CD8-positive, alpha-beta memory T cell (primary cell): ENCODE measurements at regions of chr5 and their contacts with region 1.

Region 1: DNA sequence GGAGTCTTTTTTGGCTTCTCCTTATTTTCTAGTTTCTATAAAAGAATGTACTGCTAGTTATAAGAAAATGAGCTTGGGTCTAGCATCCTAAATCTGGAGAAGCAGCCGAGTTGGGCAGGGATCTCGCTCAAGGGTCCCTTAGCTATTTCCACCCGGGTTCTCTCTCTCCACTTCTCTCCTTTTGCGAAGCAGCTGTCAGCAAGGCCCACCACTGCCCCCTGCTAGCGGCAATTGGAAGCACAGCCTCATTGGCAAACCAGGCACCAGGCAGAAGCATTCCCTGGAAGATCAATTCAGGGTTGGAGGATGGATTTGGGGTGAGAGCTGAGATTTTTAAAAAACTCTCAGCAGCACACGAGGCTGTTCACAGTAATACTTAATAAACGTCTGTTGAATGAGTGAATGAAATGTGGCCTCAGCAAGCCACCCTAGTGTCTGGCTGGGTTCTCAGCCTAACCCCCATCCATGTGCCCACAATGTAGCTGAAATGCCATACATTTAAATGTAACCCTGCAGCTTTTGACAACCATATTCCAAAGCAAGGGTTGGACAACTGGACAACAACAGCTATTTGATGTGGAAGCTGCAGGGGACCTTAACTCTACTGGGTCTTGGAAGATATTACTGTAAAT is 34.6 kb upstream of the TNIP1 start:
- DNase-seq: peak; percentile 57 to 79 (median 65)
- H3K4me3 ChIP-seq: no peak overlapping the region
- H3K4me3 Mint-ChIP-seq: no peak overlapping the region
- H3K27ac ChIP-seq: no peak overlapping the region
- H3K27ac Mint-ChIP-seq: peak overlapping the region in 7 of 8 donors; percentile 21 to 57 (median 42)
- H3K4me1 ChIP-seq: peaks cover 4% of the 10 kb centered on the region
- H3K4me1 Mint-ChIP-seq: peaks cover 0 to 32% (median 6%) of the 10 kb centered on the region in 3 donors
- H3K27me3 ChIP-seq: no peaks in the 10 kb centered on the region
- H3K27me3 Mint-ChIP-seq: no peaks in the 10 kb centered on the region

Region 2: DNA sequence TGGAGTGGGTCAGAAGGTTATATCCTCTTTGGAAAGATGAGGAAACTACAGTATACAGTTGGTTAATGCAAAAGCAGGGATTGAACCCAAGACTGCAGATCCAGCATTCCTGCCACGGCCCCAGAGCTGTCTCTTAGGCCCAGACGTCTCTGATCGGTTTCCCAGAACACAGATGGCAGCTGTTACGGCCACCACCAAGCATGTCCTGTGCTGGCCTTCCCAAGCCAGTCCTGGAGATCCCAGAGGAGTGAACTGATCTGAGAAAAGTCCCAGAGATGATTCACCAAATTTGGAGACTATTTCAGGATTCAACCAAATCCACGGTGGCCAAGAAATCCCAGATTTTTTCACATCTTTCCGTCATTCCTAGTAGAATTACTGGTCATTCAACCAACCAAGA is 54.6 kb before region 1 on chr5:
- CTCF ChIA-PET with region 1: interaction called, 267 read pairs
- POLR2A ChIA-PET with region 1: no interaction called
- DNase-seq: no peak
- H3K4me3 ChIP-seq: no peak overlapping the region
- H3K4me3 Mint-ChIP-seq: no peak overlapping the region
- H3K27ac ChIP-seq: no peak overlapping the region
- H3K27ac Mint-ChIP-seq: peak overlapping the region in 7 of 8 donors; percentile 35 to 94 (median 50)
- H3K4me1 ChIP-seq: peaks cover 8% of the 10 kb centered on the region
- H3K4me1 Mint-ChIP-seq: peaks cover 18 to 57% (median 18%) of the 10 kb centered on the region in 3 donors
- H3K27me3 ChIP-seq: no peaks in the 10 kb centered on the region
- H3K27me3 Mint-ChIP-seq: no peaks in the 10 kb centered on the region

Region 3: GRCh38 chr5:151086905-151087360 is 28.5 kb before region 1 on chr5:
- CTCF ChIA-PET with region 1: interaction called, 40 read pairs
- POLR2A ChIA-PET with region 1: no interaction called
- DNase-seq: peak in 4 of 5 donors; percentile 57 to 78 (median 66)
- H3K4me3 ChIP-seq: peak overlapping the region; percentile 23
- H3K4me3 Mint-ChIP-seq: peak overlapping the region; percentile 49 to 87 (median 62)
- H3K27ac ChIP-seq: peak overlapping the region; percentile 41
- H3K27ac Mint-ChIP-seq: peak overlapping the region; percentile 59 to 96 (median 82)
- H3K4me1 ChIP-seq: peaks cover 51% of the 10 kb centered on the region
- H3K4me1 Mint-ChIP-seq: peaks cover 44 to 61% (median 61%) of the 10 kb centered on the region in 3 donors
- H3K27me3 ChIP-seq: no peaks in the 10 kb centered on the region
- H3K27me3 Mint-ChIP-seq: no peaks in the 10 kb centered on the region

Region 4: DNA sequence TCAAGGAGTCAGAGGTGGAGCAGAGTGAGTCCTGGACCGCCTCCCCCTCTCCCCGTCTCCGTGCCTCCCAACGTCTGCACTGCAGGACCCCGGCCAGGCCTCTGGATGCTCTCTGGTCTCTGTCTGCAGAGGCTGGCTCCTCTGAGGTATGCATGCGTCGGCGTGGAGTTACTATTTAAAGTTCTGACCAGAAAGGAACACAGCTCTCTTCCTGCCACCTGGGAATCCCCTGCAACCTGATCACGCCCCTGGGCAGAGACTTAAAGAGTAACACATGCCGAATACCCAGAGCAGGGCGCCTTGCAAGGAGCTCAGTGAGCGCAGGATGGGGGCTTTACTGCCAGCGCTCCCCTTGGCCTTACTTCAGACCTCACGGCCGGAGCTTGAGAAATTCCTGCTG is 26.1 kb after region 1 on chr5:
- CTCF ChIA-PET with region 1: interaction called, 22 read pairs
- POLR2A ChIA-PET with region 1: no interaction called
- DNase-seq: peak; percentile 39 to 80 (median 45)
- H3K4me3 ChIP-seq: peak overlapping the region; percentile 35
- H3K4me3 Mint-ChIP-seq: peak overlapping the region; percentile 40 to 89 (median 82)
- H3K27ac ChIP-seq: peak overlapping the region; percentile 38
- H3K27ac Mint-ChIP-seq: peak overlapping the region; percentile 92 to 97 (median 93)
- H3K4me1 ChIP-seq: peaks cover 88% of the 10 kb centered on the region
- H3K4me1 Mint-ChIP-seq: peaks cover 92 to 100% (median 97%) of the 10 kb centered on the region in 3 donors
- H3K27me3 ChIP-seq: no peaks in the 10 kb centered on the region
- H3K27me3 Mint-ChIP-seq: no peaks in the 10 kb centered on the region

Region 5: DNA sequence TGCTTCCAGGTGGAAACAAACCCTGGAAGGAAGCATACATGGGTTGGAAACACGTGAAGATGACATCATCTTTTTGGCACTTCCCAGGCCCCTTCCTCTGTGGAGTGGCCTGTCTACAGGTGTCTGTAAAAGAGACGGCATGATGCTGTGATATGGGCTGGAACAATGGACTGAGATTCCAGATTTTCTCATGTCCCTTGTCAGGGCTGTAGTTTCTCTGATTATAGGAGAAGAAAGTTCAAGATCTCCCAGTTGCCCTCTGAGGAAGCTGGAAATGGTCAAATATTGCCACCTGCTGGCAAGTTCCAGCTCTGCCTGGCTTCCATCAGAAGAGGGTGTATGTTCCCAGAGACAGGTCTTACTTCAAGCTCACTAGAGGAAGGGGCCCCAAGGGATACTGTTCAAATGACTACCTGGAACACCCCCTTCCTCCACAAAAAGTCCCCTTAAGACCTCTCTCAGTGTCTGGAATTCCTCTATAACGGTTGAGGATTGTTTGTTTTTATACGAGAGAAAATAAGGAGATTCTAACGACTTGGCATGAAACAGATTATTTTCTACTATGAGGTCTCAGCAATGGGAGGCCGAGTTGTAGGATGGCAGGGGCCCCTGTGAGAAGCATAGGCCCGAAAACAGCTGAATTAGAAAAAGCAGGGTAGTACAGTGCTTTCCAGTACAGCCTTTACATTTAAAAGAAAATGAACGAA is 49.4 kb after region 1 on chr5:
- CTCF ChIA-PET with region 1: interaction called, 117 read pairs
- POLR2A ChIA-PET with region 1: no interaction called
- DNase-seq: peak; percentile 59 to 85 (median 70)
- H3K4me3 ChIP-seq: no peak overlapping the region
- H3K4me3 Mint-ChIP-seq: peak overlapping the region in 1 of 7 donors; percentile 49
- H3K27ac ChIP-seq: no peak overlapping the region
- H3K27ac Mint-ChIP-seq: peak overlapping the region in 5 of 8 donors; percentile 10 to 89 (median 42)
- H3K4me1 ChIP-seq: peaks cover 9% of the 10 kb centered on the region
- H3K4me1 Mint-ChIP-seq: peaks cover 13 to 20% (median 14%) of the 10 kb centered on the region in 3 donors
- H3K27me3 ChIP-seq: no peaks in the 10 kb centered on the region
- H3K27me3 Mint-ChIP-seq: peaks cover 0 to 2% of the 10 kb centered on the region in 2 donors